A549 (cell line): ENCODE measurements at regions of chr17 and their contacts with region 1.

Region 1: GRCh38 chr17:41451154-41451728 is 10.5 kb upstream of the KRT38 start:
- DNase-seq: no peak
- ATAC-seq: no peak
- H3K4me3 ChIP-seq: no peak overlapping the region
- H3K27ac ChIP-seq: no peak overlapping the region
- H3K4me1 ChIP-seq: no peaks in the 10 kb centered on the region
- CTCF ChIP-seq: no peak
- EP300 ChIP-seq: no peak
- POLR2A ChIP-seq: no peak
- RAD21 ChIP-seq: no peak

Region 2: GRCh38 chr17:41464682-41465081 is 13.4 kb after region 1 on chr17:
- CTCF ChIA-PET with region 1: interaction called, 13 read pairs
- POLR2A ChIA-PET with region 1: no interaction called
- DNase-seq: peak; percentile 50 to 79
- ATAC-seq: peak; percentile 76 to 77; a peak in 5 of 6 replicates
- H3K4me3 ChIP-seq: no peak overlapping the region
- H3K27ac ChIP-seq: no peak overlapping the region
- H3K4me1 ChIP-seq: peaks cover 13% of the 10 kb centered on the region
- CTCF ChIP-seq: no peak
- EP300 ChIP-seq: no peak
- POLR2A ChIP-seq: no peak
- RAD21 ChIP-seq: no peak